Head of caudate nucleus (tissue), 42 donors: ENCODE measurements at regions of chr12 and their contacts with region 1.

Region 1: DNA sequence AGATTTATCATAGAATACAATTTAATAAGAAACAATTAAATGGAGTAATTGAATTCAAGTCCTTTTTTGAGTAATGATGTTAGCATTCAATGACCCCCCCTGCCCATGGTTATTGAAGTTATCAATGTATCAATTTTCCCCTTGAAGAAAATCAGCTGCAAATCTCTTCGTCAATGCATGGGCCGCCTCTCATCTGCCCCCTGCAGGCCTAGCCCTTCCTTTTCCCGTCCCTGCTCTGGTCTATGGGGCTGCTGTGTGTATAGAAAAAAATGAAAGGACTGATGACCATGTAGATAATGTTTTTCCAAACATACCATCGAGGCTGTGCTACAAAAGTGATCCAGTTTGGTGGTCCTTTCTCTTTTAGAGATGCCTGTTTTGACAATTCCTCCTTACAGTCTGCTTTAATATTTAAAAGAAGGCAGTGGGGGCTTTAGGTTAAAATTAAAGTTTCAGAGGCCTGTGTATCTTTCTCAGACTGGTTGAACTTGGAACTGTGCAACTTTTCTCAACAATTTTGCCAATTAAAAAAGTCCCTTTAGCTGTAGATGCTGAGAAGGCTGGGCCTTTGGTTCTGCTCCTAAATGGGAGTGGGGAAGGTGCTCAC is 98.4 kb downstream of the APAF1 start:
- DNase-seq: peak in 30 of 42 donors; percentile 28 to 83 (median 62)

Region 2: DNA sequence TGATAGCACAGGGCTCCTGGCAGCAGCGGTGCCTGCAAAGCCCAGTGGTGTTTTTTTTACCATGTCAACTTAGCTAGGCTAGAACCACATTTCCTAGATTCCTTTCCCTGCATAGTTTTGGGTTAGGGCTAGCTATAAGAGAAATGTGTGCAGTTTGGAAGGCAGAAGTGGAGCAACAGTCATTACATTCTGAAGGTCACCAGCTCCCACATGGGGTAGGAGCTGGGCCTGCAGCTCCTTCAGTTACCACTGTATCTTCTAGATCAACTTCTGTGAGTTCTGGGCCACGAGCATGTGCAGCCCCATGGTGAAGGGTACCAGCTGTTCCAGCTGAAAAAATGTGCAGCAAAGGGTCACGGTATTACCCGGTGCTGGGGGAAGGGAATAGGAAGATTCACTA is 152.2 kb before region 1 on chr12:
- intact Hi-C with region 1: no loop called
- DNase-seq: no peak

Region 3: DNA sequence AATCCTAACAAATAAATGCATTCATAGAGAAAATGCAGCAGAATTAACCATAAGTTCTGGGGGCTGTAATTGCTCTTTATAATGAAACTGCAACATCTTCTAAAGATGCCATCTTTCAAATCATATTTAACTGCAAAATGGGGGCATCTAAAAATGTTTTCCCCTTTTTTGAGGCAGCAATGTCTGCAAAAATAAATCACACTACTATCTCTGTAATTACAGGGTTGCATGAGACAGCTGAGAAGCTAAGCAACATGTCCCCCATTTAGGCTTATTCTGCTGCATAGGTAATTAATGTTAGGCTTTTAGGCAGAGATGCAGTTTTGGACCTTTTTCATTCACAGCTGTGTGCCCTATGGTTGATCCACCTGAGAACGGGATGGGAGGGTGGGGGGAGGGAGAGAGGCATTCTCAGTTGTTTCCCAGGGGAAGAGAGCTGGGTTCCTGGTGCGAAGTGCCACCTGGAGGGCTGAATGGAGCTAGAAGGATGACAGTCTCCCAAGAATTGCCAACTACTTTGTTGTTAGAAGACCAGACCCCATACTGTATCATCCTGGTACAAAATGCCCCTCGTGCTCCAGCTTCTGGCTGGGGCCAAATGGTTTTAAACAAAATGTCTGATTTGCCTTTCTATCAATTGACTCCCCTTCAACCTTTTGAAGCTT is 55.8 kb after region 1 on chr12:
- intact Hi-C with region 1: no loop called
- DNase-seq: no peak

Region 4: DNA sequence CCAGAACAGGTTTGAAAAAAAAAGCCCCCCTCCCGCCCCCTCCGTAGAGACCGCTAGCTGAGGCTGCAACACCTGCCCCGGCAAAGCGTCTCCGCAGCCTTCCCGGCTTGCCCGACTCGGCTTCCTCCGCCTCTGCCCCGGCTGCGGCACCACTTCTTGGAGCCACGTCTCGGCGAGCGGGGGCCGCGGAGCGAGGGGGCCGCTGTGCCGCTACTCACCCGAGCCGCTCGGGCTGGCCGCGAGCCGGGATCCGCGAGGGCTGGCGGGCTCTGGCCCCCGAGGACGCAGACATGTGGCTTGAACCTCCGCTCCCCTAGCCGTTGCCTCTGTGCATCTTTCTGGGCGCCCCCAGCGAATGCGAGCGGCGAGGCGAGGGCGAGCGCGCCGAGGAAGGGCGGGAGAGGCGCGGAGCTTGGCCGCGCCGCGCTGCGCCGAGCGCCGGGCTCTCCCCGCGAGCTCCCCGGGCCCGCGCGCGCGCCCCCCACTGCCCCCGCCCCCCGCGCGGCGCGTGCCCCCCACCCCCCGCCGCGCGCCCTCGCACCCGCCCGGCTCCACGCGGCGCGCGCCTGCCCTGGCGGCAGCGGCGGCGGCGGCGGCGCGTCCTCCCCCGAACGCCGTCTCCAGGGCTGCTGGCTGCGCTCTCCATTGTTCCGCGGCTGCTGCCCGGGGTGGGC is 151.1 kb after region 1 on chr12:
- intact Hi-C with region 1: loop called (anchors 10 kb)
- DNase-seq: peak; percentile 11 to 87 (median 70)

Region 5: DNA sequence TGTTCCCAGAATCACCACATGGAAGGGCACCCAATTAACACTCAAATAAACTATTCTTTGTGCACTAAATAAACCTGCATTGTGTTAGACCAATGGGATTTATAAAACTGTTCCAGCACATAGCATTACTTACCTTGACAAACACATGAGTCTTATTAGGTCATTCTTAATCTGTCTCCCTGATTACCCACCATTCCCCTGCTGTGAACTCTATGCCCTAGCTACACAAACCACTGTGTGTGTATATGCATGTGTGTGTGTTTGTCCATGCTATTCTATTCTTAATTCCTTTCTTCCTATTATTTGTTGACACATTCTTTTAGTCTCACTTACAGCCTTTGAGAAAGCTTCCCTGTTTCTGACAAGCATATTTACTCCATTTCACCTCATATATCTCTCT is 600.5 kb after region 1 on chr12:
- intact Hi-C with region 1: no loop called
- DNase-seq: no peak